ENCODE measurements at regions of chrX and their contacts with region 1.

Region 1: GRCh38 chrX:20112021-20112797 is 4.5 kb downstream of the MAP7D2 start:
- DNase-seq: no peak
- ATAC-seq: no peak
- H3K4me3 ChIP-seq: no peak overlapping the region
- H3K4me3 Mint-ChIP-seq: no peak overlapping the region
- H3K27ac ChIP-seq: no peak overlapping the region
- H3K27ac Mint-ChIP-seq: no peak overlapping the region
- H3K4me1 ChIP-seq: peaks cover 0 to 9% of the 10 kb centered on the region in 2 experiments
- H3K4me1 Mint-ChIP-seq: peaks cover 2 to 14% (median 5%) of the 10 kb centered on the region in 3 donors
- H3K27me3 ChIP-seq: peaks cover 2 to 13% of the 10 kb centered on the region in 2 experiments
- H3K27me3 Mint-ChIP-seq: peaks cover 13 to 19% of the 10 kb centered on the region in 2 donors

Region 2: DNA sequence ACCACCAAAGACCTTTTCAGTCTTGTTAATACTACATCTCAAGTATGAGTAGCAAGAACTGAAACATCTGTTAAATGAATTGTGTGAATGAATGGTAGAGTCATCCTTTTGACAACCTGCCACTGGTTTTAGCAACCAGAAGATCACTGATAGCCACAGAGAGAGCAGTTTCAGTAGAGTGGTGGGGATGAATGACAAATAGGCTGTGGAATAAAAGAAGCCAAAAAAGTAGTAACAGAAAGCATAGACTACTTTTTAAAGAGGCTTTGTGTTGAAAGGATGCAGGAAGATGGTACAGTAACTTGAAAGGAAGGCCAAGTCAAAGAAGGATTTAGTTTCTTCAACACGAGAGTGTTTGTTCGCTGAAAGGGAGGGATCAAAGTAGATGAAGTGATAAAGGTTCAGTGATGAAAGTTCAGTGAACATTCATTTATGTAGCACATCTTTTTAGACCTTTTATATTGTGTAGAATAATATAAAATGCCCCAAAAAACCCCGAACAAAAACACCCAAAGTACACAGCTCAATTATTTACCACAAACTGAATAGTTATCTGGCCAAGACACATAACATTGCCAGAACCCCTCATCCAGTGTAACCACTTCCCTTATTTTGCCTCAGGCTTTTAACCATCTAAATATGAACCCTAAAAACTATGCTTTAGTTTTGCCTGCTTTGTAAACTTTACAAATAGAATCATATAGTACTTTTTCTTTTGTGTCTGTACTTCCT is 69.6 kb after region 1 on chrX:
- CTCF ChIA-PET with region 1: no interaction called
- POLR2A ChIA-PET with region 1: interaction called in 1 of 2 experiments, 11 read pairs
- DNase-seq: no peak
- ATAC-seq: peak in 1 of 4 experiments; percentile 48
- H3K4me3 ChIP-seq: no peak overlapping the region
- H3K4me3 Mint-ChIP-seq: no peak overlapping the region
- H3K27ac ChIP-seq: peak overlapping the region; percentile 29
- H3K27ac Mint-ChIP-seq: peak overlapping the region; percentile 77 to 84
- H3K4me1 ChIP-seq: no peaks in the 10 kb centered on the region
- H3K4me1 Mint-ChIP-seq: peaks cover 9 to 23% (median 20%) of the 10 kb centered on the region in 3 donors
- H3K27me3 ChIP-seq: no peaks in the 10 kb centered on the region
- H3K27me3 Mint-ChIP-seq: peaks cover 0 to 14% of the 10 kb centered on the region in 2 donors

Region 3: DNA sequence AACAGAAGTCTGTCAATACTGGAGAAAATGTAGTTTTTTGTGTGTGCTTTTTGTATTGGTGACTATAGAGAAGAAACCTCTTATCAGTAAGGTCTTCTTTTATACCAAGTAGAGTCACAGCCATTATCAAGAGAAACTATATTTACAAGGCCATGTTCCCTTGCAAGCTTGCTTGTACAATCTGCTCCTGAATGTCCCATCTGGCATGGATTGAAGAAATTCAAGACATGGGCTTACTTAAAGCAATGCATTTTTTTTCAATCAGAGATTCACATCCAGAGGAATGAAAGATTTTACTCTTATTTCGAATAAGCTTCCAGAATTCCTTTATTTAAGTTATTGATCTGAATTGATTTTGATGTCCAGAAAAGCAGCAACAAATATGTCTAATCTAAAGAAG is 691.8 kb after region 1 on chrX:
- CTCF ChIA-PET with region 1: no interaction called
- POLR2A ChIA-PET with region 1: no interaction called
- DNase-seq: no peak
- ATAC-seq: no peak
- H3K4me3 ChIP-seq: no peak overlapping the region
- H3K4me3 Mint-ChIP-seq: no peak overlapping the region
- H3K27ac ChIP-seq: no peak overlapping the region
- H3K27ac Mint-ChIP-seq: no peak overlapping the region
- H3K4me1 ChIP-seq: no peaks in the 10 kb centered on the region
- H3K4me1 Mint-ChIP-seq: no peaks in the 10 kb centered on the region
- H3K27me3 ChIP-seq: no peaks in the 10 kb centered on the region
- H3K27me3 Mint-ChIP-seq: peaks cover 0 to 3% of the 10 kb centered on the region in 2 donors

Measured in T-cell (primary cell).